ENCODE measurements at regions of chr2 and their contacts with region 1.

Region 1: GRCh38 chr2:68709421-68709911 is 25.1 kb upstream of the ARHGAP25 start:
- DNase-seq: peak in 1 of 2 experiments; percentile 52
- H3K4me3 ChIP-seq: no peak overlapping the region
- H3K27ac ChIP-seq: no peak overlapping the region
- H3K4me1 ChIP-seq: peaks cover 0 to 2% (median 1%) of the 10 kb centered on the region in 4 experiments; a peak in 2 of 7 replicates
- H3K27me3 ChIP-seq: no peaks in the 10 kb centered on the region
- CTCF ChIP-seq: peak; percentile 36 to 73 (median 67)
- EP300 ChIP-seq: no peak
- POLR2A ChIP-seq: no peak
- RAD21 ChIP-seq: peak; percentile 54 to 69

Region 2: DNA sequence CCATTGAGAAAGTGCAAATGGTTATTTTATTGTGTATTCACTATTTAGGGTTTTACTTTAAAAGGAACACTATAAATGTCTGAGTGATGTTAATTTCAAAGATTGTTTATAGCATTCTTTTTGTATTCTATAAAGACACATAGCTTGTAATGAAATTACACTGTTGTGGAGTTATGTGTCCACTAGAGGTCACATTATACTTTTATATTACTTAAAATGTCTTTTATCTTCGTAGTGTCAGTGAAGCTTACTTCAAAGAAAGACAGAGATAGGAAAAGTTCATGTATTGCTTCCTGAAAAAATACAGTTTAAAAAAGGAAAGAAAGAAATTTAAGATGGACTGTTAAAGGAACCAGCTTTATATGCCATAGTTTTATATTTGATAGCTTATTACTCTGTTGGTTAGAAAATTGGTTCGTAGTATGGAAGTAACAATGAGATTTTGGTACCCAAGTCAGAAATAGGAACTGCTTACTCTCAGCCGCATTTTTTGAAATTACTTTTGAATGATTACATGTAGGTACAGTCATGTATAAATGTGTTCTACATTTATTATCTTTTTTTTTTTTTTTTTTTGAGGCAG is 221.6 kb before region 1 on chr2:
- CTCF ChIA-PET with region 1: interaction called, 17 read pairs
- POLR2A ChIA-PET with region 1: no interaction called
- DNase-seq: no peak
- H3K4me3 ChIP-seq: no peak overlapping the region
- H3K27ac ChIP-seq: no peak overlapping the region
- H3K4me1 ChIP-seq: 0 out of 7 replicates have a peak, but pooled peaks cover 0 to 3% (median 0%) of the 10 kb centered on the region in 4 experiments
- H3K27me3 ChIP-seq: no peaks in the 10 kb centered on the region
- CTCF ChIP-seq: peak in 1 of 3 experiments; percentile 17; a peak in 2 of 4 replicates
- EP300 ChIP-seq: no peak
- POLR2A ChIP-seq: no peak
- RAD21 ChIP-seq: peak in 1 of 2 experiments; percentile 44; a peak in 3 of 4 replicates

Region 3: GRCh38 chr2:68643011-68643873 is 66.2 kb before region 1 on chr2 and contains the start of gene PROKR1:
- CTCF ChIA-PET with region 1: interaction called, 12 read pairs
- POLR2A ChIA-PET with region 1: interaction called, 3 read pairs
- DNase-seq: peak in 1 of 2 experiments; percentile 83
- H3K4me3 ChIP-seq: peak within 1 kb of the TSS; percentile 53 to 91 (median 73)
- H3K27ac ChIP-seq: no peak within 1 kb of the TSS
- H3K4me1 ChIP-seq: peaks cover 0 to 5% (median 2%) of the 10 kb centered on the region in 4 experiments; a peak in 5 of 7 replicates
- H3K27me3 ChIP-seq: peaks cover 2 to 29% (median 16%) of the 10 kb centered on the region in 4 experiments
- CTCF ChIP-seq: no peak
- EP300 ChIP-seq: no peak
- POLR2A ChIP-seq: 0 out of 3 replicates have a peak, but pooled peaks of 1 of the 2 experiments have one; percentile 14
- RAD21 ChIP-seq: no peak; a peak in 1 of 4 replicates
- total RNA-seq, gene PROKR1: 3.9 and 4.0 TPM in 2 replicates

Region 4: DNA sequence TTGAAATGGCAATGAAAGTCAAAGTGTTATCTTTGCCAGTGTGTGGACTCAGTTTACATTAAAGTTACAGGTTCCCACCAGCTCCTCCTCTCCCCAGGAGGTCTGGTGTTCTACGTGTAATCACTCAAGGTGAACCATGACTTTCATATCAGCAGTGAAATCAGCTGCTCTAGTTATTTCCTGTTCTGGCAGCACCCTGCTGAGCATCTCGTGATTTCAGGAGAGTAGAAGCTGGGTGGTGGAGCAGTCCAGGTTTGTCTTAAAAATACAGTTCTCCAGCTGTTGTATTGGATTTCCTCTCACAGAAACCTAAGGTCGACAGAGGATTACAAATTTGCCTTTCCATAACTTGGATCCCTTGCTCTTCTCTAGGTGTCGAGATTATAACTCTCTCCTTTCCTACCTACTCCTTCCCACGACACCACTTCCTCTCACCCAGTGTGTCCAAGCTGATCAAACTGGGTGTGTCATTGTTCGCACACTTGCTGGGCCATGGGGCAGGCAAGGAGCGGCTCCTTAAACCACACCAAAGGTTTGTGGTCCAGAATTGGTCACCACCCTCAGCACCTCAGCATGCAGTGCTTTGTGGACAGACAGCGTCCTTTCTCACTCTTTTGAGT is 12.1 kb after region 1 on chr2:
- CTCF ChIA-PET with region 1: interaction called, 30 read pairs
- POLR2A ChIA-PET with region 1: no interaction called
- DNase-seq: no peak
- H3K4me3 ChIP-seq: no peak overlapping the region
- H3K27ac ChIP-seq: no peak overlapping the region
- H3K4me1 ChIP-seq: no peaks in the 10 kb centered on the region
- H3K27me3 ChIP-seq: no peaks in the 10 kb centered on the region
- CTCF ChIP-seq: no peak
- EP300 ChIP-seq: no peak
- POLR2A ChIP-seq: no peak
- RAD21 ChIP-seq: no peak

Region 5: GRCh38 chr2:68796294-68796905 is 86.9 kb after region 1 on chr2:
- CTCF ChIA-PET with region 1: no interaction called
- POLR2A ChIA-PET with region 1: no interaction called
- DNase-seq: no peak
- H3K4me3 ChIP-seq: no peak overlapping the region
- H3K27ac ChIP-seq: no peak overlapping the region
- H3K4me1 ChIP-seq: peaks cover 0 to 3% (median 2%) of the 10 kb centered on the region in 4 experiments; a peak in 1 of 7 replicates
- H3K27me3 ChIP-seq: no peaks in the 10 kb centered on the region
- CTCF ChIP-seq: no peak
- EP300 ChIP-seq: no peak
- POLR2A ChIP-seq: no peak
- RAD21 ChIP-seq: no peak

Region 6: DNA sequence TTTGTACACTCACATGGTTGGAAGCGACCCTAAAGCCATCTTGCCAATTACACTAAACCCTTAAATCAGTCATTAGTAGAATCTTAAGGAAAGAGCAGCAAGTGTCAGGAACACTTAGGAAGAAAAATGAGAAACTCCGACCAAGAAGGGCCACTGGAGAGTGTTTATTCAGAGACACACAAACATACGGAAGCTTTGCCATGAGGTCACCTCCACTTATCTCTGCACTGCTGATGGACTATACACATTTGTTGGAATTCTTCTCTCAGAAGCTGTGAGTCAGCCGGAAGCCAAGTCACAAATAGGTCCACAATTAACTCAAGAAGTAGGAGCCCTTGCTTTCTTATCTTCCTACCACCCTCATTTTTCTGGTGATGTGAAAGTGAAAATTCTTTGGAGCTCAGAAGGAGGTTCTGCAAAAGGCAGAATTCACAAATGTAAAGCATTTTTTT is 140.1 kb after region 1 on chr2:
- CTCF ChIA-PET with region 1: no interaction called
- POLR2A ChIA-PET with region 1: no interaction called
- DNase-seq: no peak
- H3K4me3 ChIP-seq: no peak overlapping the region
- H3K27ac ChIP-seq: no peak overlapping the region
- H3K4me1 ChIP-seq: no peaks in the 10 kb centered on the region
- H3K27me3 ChIP-seq: no peaks in the 10 kb centered on the region; a peak in 1 of 7 replicates
- CTCF ChIP-seq: no peak
- EP300 ChIP-seq: no peak
- POLR2A ChIP-seq: no peak
- RAD21 ChIP-seq: no peak

Region 7: DNA sequence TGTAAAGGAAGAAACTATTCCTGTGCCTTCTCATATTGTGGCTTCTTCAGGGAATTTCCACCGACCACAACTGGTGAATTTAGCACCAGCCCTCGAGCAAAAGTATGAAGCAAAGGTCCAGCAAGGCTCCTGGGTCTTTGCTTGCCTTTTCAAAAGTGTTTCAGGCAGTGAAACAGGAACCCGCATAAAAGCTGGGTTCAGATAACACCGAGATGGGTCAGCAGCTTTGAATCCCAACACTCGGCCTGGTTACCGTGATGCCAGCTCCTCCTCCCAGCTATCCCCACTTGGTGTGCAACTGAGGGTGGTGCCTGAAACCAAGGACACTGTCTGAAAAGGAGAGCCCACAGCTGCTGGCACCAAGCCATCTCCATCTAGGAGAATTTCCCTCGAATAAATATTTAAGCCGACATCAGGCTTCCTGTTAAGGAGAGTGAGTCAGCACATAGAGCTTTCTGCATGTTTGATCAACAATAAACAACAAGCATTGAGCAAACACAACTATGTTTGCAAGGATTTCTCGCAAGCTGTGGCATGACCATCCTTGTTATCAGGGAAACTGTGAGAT is 373.0 kb after region 1 on chr2:
- CTCF ChIA-PET with region 1: no interaction called
- POLR2A ChIA-PET with region 1: no interaction called
- DNase-seq: no peak
- H3K4me3 ChIP-seq: no peak overlapping the region
- H3K27ac ChIP-seq: no peak overlapping the region
- H3K4me1 ChIP-seq: peaks cover 2 to 4% (median 4%) of the 10 kb centered on the region in 4 experiments
- H3K27me3 ChIP-seq: no peaks in the 10 kb centered on the region
- CTCF ChIP-seq: no peak
- EP300 ChIP-seq: no peak
- POLR2A ChIP-seq: no peak
- RAD21 ChIP-seq: no peak